ENCODE measurements at regions of chr1 and their contacts with region 1.

Region 1: GRCh38 chr1:20574686-20575540 is 14.0 kb upstream of the CDA start:
- DNase-seq: peak; percentile 75
- ATAC-seq: peak; percentile 91
- H3K4me3 ChIP-seq: no peak overlapping the region
- H3K27ac ChIP-seq: no peak overlapping the region
- H3K4me1 ChIP-seq: no peaks in the 10 kb centered on the region; the same call in 1 of the 2 replicates
- H3K27me3 ChIP-seq: peaks cover 20% of the 10 kb centered on the region
- CTCF ChIP-seq: peak; percentile 93
- POLR2A ChIP-seq: no peak
- RAD21 ChIP-seq: peak; percentile 90

Region 2: GRCh38 chr1:20588634-20589225 is 13.8 kb after region 1 on chr1 and contains the start of gene CDA:
- CTCF ChIA-PET with region 1: interaction called, 18 read pairs
- POLR2A ChIA-PET with region 1: no interaction called
- dilution Hi-C with region 1: no loop called
- in situ Hi-C with region 1: no loop called
- intact Hi-C with region 1: no loop called
- DNase-seq: no peak
- ATAC-seq: no peak
- H3K4me3 ChIP-seq: no peak within 1 kb of the TSS
- H3K27ac ChIP-seq: peak within 1 kb of the TSS; percentile 60
- H3K4me1 ChIP-seq: peaks cover 17% of the 10 kb centered on the region
- H3K27me3 ChIP-seq: peaks cover 4% of the 10 kb centered on the region; the same call in 1 of the 2 replicates
- CTCF ChIP-seq: no peak
- POLR2A ChIP-seq: no peak
- RAD21 ChIP-seq: no peak
- total RNA-seq, gene CDA: 0.90 and 1.4 TPM in 2 replicates

Region 3: DNA sequence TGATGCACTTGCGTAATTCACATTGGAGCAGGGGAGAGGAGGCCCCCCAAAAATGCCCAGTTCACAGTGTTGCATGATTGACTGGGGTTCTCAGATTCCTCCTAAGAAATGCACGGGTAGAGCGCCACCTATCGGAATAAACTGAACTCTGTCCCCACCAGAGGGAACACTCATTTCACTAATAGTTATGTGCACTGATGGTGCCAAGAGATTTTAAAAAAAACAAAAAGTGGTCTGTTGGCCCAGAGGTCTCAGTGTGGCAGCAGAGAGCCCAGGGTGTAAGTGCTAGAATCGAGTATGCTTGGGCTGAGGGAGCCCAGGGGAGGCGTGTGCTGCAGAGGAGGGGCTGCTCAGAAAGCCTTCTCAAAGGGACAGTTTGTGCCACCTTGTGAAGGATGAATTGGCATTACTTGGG is 65.3 kb after region 1 on chr1:
- CTCF ChIA-PET with region 1: interaction called, 25 read pairs
- POLR2A ChIA-PET with region 1: no interaction called
- dilution Hi-C with region 1: no loop called
- in situ Hi-C with region 1: loop called (anchors 5 kb)
- intact Hi-C with region 1: loop called (anchors 1 kb)
- DNase-seq: peak; percentile 54
- ATAC-seq: peak; percentile 76
- H3K4me3 ChIP-seq: no peak overlapping the region
- H3K27ac ChIP-seq: no peak overlapping the region
- H3K4me1 ChIP-seq: no peaks in the 10 kb centered on the region
- H3K27me3 ChIP-seq: no peaks in the 10 kb centered on the region
- CTCF ChIP-seq: peak; percentile 82
- POLR2A ChIP-seq: no peak
- RAD21 ChIP-seq: peak; percentile 86

Region 4: DNA sequence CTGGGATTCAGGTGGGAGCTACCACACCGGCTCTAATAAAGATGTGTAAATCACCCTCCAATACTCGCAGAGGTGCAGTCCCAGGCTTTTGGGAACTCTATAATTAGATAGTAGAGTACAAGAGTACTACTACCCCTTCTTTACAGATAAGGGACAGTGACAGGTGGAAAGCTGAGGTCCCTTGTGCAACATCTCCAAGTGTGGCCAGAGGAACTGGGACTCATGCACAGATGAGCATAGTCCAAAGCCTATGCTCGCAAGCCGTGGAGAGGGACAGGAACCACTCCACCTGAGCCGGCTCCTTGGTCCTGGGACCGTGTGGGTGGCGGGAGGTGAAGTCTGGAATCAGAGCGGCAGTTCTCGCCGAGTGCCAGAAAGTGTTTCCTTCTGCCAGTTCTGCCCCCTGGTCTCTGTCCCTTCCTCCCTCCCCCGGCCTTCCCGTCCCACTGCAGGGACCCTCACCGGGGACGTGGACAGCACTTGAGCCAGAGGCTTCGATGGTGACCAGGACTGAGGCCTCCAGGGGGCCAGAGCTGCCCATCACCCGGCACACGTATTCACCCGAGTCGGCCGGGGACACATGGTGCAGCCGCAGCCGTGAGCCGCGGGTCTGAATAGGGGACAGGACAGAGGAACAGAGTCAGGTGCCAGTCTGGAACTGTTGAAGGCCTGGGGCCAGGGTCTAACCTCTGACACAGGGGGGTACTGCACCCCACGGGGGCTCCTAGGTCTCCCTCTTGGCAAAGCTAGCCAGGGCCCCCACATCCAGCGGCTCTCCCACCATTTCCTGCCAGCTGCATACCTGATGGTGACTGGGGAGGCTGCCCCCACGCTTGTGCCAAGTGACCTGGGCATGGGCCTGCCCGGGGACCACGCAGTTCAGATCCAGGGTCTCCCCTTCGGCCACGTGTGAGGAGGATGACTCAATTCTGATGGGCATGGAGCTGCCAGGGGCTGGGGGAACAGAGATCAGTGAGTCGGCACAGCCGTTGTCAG is 1271.0 kb after region 1 on chr1:
- CTCF ChIA-PET with region 1: no interaction called
- POLR2A ChIA-PET with region 1: no interaction called
- dilution Hi-C with region 1: no loop called
- in situ Hi-C with region 1: no loop called
- intact Hi-C with region 1: no loop called
- DNase-seq: no peak
- ATAC-seq: no peak
- H3K4me3 ChIP-seq: no peak overlapping the region
- H3K27ac ChIP-seq: no peak overlapping the region
- H3K4me1 ChIP-seq: no peaks in the 10 kb centered on the region
- H3K27me3 ChIP-seq: no peaks in the 10 kb centered on the region
- CTCF ChIP-seq: no peak
- POLR2A ChIP-seq: no peak
- RAD21 ChIP-seq: no peak

Measured in IMR-90 (cell line).